K562 (cell line): ENCODE measurements at regions of chr4 and their contacts with region 1.

Region 1: GRCh38 chr4:40736910-40737309 is 12.8 kb upstream of the NSUN7 start:
- DNase-seq: peak in 3 of 4 experiments; percentile 9 to 14 (median 11)
- ATAC-seq: no peak
- H3K4me3 ChIP-seq: no peak overlapping the region
- H3K27ac ChIP-seq: no peak overlapping the region
- H3K4me1 ChIP-seq: no peaks in the 10 kb centered on the region
- H3K27me3 ChIP-seq: peaks cover 0 to 3% of the 10 kb centered on the region in 2 experiments; a peak in 3 of 5 replicates
- CTCF ChIP-seq: peak; percentile 17 to 66 (median 33); a peak in 3 of 6 replicates
- EP300 ChIP-seq: no peak
- POLR2A ChIP-seq: no peak
- RAD21 ChIP-seq: peak; percentile 70 to 71

Region 2: GRCh38 chr4:40840985-40841571 is 104.2 kb after region 1 on chr4:
- CTCF ChIA-PET with region 1: no interaction called
- POLR2A ChIA-PET with region 1: no interaction called
- in situ Hi-C with region 1: loop called (anchors 5 kb)
- intact Hi-C with region 1: loop called (anchors 5 kb)
- DNase-seq: peak; percentile 55 to 73 (median 64)
- ATAC-seq: peak; percentile 95
- H3K4me3 ChIP-seq: no peak overlapping the region
- H3K27ac ChIP-seq: no peak overlapping the region
- H3K4me1 ChIP-seq: no peaks in the 10 kb centered on the region; a peak in 1 of 5 replicates
- H3K27me3 ChIP-seq: peaks cover 8 to 24% of the 10 kb centered on the region in 2 experiments; a peak in 4 of 5 replicates
- CTCF ChIP-seq: peak; percentile 75 to 86 (median 76)
- EP300 ChIP-seq: no peak
- POLR2A ChIP-seq: no peak
- RAD21 ChIP-seq: peak; percentile 20 to 42; a peak in 2 of 4 replicates

Region 3: DNA sequence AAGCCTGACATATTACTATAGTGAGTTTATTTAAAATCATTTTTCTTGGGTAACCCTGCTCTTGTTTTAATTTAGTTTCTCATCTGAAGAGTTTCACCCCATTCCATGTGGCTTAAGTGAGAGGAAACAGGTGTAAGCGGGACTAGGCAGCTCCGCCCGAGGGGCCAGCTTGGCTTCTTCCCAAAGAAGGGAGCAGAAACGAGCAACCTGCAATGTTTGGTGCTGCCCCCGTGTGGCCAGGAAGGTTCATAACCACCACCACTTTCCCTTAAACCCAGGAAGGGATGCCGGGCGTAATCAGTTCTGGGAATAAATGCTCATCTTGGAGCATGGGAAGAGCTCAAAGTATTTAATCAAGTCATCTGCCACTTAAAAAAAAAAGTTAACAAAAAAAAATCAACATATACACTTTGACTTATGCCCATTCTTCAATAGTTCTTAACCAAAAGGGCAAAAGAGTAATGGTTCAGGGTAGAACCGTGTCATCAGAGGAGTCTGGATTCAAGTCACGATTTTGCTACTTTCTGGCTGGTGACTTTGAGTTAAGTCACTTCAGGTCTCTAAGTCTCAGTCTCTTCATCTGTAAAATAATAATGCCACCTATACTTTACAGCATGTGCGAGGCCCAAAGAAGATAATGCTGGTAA is 160.8 kb after region 1 on chr4:
- CTCF ChIA-PET with region 1: interaction called, 8 read pairs
- POLR2A ChIA-PET with region 1: no interaction called
- in situ Hi-C with region 1: loop called (anchors 10 kb)
- intact Hi-C with region 1: loop called (anchors 5 kb)
- DNase-seq: peak; percentile 73 to 82 (median 77)
- ATAC-seq: peak; percentile 96
- H3K4me3 ChIP-seq: no peak overlapping the region
- H3K27ac ChIP-seq: no peak overlapping the region
- H3K4me1 ChIP-seq: no peaks in the 10 kb centered on the region
- H3K27me3 ChIP-seq: peaks cover 9 to 21% of the 10 kb centered on the region in 2 experiments; a peak in 4 of 5 replicates
- CTCF ChIP-seq: peak; percentile 67 to 84 (median 75)
- EP300 ChIP-seq: no peak
- POLR2A ChIP-seq: no peak
- RAD21 ChIP-seq: peak; percentile 45 to 60

Region 4: GRCh38 chr4:40908702-40909362 is 171.9 kb after region 1 on chr4:
- CTCF ChIA-PET with region 1: no interaction called
- POLR2A ChIA-PET with region 1: no interaction called
- in situ Hi-C with region 1: loop called (anchors 10 kb)
- intact Hi-C with region 1: no loop called
- DNase-seq: peak; percentile 74 to 83 (median 78)
- ATAC-seq: peak; percentile 99
- H3K4me3 ChIP-seq: no peak overlapping the region
- H3K27ac ChIP-seq: no peak overlapping the region
- H3K4me1 ChIP-seq: no peaks in the 10 kb centered on the region
- H3K27me3 ChIP-seq: peaks cover 7 to 48% of the 10 kb centered on the region in 2 experiments
- CTCF ChIP-seq: peak; percentile 92 to 93 (median 92)
- EP300 ChIP-seq: no peak
- POLR2A ChIP-seq: no peak
- RAD21 ChIP-seq: peak; percentile 49 to 60

Region 5: DNA sequence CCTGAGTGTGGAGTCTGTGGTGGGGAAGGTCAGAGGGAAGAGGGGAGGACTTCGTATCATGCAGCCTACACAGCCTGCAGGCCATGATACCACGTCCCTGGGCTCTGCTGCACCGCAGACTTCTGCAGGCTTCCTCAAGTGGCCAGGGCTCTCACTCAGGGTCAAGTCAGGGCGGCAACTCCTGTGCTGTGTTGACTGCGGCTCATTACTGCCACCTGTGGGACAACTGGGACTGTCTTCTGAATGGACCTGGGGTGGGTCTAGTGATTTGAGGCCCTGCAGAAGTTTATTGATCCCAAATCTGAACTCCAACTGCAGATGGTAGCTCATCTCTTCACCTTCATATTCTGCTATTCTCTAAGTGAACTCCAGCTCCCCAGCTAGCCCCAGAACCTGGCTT is 180.0 kb after region 1 on chr4:
- CTCF ChIA-PET with region 1: no interaction called
- POLR2A ChIA-PET with region 1: no interaction called
- in situ Hi-C with region 1: no loop called
- intact Hi-C with region 1: loop called (anchors 5 kb)
- DNase-seq: peak; percentile 46 to 68 (median 58)
- ATAC-seq: peak; percentile 99
- H3K4me3 ChIP-seq: no peak overlapping the region
- H3K27ac ChIP-seq: no peak overlapping the region
- H3K4me1 ChIP-seq: no peaks in the 10 kb centered on the region
- H3K27me3 ChIP-seq: peaks cover 13 to 26% of the 10 kb centered on the region in 2 experiments; a peak in 4 of 5 replicates
- CTCF ChIP-seq: peak; percentile 61 to 74 (median 65)
- EP300 ChIP-seq: no peak
- POLR2A ChIP-seq: no peak
- RAD21 ChIP-seq: peak; percentile 18 to 50; a peak in 3 of 4 replicates